Right cardiac atrium (tissue), 5 donors: ENCODE measurements at regions of chr14 and their contacts with region 1.

Region 1: GRCh38 chr14:23269193-23269592 is 16.7 kb downstream of the HOMEZ start:
- DNase-seq: no peak
- ATAC-seq: no peak
- H3K4me3 ChIP-seq: no peak overlapping the region
- H3K27ac ChIP-seq: no peak overlapping the region
- H3K4me1 ChIP-seq: no peaks in the 10 kb centered on the region
- H3K27me3 ChIP-seq: no peaks in the 10 kb centered on the region

Region 2: DNA sequence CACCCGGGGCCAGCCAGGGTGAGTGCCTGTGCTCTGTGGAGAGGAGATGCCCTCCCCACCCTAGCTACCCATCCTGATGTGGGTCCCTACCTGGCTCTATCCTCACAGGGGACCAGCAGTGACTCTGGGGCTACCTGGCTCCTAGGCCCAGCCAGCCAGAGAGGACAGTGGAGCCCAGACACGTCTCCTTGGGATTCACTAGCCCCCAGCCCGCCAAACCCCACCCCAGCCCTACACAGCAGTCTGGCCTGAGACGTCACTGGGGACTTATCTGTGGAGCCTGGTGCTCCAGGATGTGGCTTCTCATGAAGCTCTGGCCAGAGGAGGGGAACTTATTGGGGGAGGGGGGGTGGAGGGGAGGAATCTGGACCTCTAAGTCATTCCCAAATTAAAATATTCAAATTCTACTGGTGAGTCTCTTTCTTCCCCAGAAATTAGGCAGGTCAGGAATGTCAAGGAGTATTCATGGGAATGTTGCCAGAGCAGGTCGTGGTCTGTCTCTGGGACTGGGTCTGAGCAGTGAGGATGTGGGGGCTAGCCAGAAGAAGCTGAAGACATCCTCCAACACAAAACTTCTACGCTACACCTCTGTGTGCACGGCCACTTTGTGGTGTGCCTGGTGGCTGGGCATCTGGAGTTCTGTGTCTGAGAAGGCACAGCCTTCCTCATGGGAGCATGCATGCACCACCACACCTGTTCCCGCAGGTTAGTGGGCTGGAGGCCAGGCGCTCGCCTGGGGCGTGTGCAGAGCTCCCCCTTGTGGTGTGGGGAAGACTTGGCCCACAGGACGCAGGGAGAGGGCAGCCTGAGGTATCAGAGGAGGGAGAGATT is 110.4 kb after region 1 on chr14:
- intact Hi-C with region 1: loop called in 1 of 4 experiments (anchors 5 kb)
- DNase-seq: peak; percentile 67 to 90 (median 89)
- ATAC-seq: peak; percentile 24 to 32
- H3K4me3 ChIP-seq: no peak overlapping the region
- H3K27ac ChIP-seq: no peak overlapping the region
- H3K4me1 ChIP-seq: no peaks in the 10 kb centered on the region
- H3K27me3 ChIP-seq: no peaks in the 10 kb centered on the region